ENCODE measurements at regions of chr18 and their contacts with region 1.

Region 1: DNA sequence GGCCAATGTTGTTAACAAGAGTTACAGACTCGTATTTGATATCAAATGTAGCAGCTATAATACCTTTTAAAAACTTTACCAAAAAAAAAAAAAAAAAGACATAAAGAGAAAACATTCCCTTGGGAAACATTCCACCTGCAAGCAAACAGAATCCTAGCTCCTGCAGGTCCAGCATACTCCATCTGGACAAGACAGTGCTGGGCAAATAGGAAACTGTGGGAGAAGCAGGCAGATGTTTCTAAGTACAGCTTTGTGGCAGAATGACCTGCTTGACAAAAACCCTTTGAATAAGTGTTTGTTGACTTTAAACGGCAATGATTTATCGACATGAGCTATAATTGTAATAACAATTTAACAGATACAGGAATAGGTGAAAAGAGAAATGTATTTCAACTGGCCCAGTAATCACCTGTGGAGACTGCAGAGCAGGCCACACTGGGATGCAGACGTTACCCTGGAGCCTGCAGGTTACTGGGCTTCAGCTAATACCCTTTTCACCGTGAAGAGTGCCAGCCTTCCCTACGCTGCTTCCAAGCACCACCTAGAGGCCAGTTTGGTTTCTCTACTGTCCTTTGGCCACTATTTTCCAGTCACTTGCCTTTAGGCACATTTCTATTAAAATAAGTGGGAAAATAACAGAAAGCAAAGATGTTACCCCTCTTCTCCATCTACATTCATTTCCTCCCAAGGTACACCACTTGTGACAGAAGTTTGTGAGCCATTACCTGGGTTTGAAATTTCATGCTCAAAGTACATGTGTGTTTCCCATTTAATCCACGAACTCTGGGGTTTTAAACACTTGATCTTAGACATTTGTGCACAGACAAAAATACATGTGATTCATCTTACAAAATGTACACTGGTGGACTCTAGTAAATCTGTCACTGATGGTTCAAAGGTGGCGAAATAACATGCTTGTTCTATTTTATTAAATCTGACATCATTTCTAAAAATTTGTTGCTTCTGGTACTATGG is 96.9 kb upstream of the ZNF397 start:
- DNase-seq: peak; percentile 31
- H3K4me3 ChIP-seq: no peak overlapping the region
- H3K27ac ChIP-seq: peak overlapping the region in 3 of 4 donors; percentile 12 to 52 (median 28)
- H3K4me1 ChIP-seq: peaks cover 0 to 18% (median 17%) of the 10 kb centered on the region in 4 donors
- H3K27me3 ChIP-seq: no peaks in the 10 kb centered on the region
- CTCF ChIP-seq: peak; percentile 71 to 83 (median 75)
- EP300 ChIP-seq: no peak
- POLR2A ChIP-seq: no peak

Region 2: DNA sequence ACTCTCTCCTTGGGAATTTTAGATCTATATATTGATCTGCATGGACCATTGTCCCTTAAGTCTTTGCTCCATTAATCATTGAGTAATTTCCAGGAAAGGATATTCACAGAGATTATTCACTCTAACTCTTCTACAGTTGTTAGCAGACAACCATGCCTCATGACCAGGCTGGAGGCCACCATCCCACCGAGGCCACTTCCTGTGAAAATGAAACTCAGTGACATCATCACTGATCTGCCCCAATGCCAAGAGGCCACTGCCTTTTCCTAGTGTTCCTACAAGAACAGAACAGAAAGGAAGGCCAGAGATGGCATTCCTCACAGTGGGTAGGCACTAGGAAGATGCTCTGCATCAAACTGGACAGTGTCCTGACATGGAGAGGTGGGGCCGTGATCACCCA is 272.5 kb before region 1 on chr18:
- intact Hi-C with region 1: loop called (anchors 10 kb)
- DNase-seq: no peak
- H3K4me3 ChIP-seq: no peak overlapping the region
- H3K27ac ChIP-seq: no peak overlapping the region
- H3K4me1 ChIP-seq: no peaks in the 10 kb centered on the region
- H3K27me3 ChIP-seq: no peaks in the 10 kb centered on the region
- CTCF ChIP-seq: no peak
- EP300 ChIP-seq: no peak
- POLR2A ChIP-seq: no peak

Region 3: DNA sequence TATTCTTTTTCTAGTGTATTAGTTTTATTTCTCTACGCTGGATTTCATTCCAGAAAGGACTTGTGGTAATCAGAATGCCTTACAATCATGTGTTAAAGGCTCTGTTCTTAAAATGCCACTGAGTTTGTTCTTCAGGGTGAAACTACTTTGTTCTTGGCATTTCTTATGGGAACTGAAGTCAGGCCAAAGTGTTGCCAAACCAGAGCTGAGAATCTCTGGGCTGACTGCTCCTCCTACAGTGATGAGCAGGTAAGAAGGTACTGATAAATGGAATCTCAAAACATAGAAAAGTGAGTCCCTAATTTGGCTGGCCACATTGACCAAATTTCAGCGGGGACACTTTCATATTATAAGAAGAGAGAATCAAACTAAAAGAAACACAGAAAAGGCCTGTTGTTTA is 41.9 kb after region 1 on chr18:
- intact Hi-C with region 1: no loop called
- DNase-seq: no peak
- H3K4me3 ChIP-seq: no peak overlapping the region
- H3K27ac ChIP-seq: no peak overlapping the region
- H3K4me1 ChIP-seq: peaks cover 0 to 3% (median 0%) of the 10 kb centered on the region in 4 donors
- H3K27me3 ChIP-seq: no peaks in the 10 kb centered on the region
- CTCF ChIP-seq: no peak
- EP300 ChIP-seq: no peak
- POLR2A ChIP-seq: no peak

Measured in esophagus muscularis mucosa (tissue), 4 donors.